ENCODE measurements at regions of chr13 and their contacts with region 1.

Region 1: DNA sequence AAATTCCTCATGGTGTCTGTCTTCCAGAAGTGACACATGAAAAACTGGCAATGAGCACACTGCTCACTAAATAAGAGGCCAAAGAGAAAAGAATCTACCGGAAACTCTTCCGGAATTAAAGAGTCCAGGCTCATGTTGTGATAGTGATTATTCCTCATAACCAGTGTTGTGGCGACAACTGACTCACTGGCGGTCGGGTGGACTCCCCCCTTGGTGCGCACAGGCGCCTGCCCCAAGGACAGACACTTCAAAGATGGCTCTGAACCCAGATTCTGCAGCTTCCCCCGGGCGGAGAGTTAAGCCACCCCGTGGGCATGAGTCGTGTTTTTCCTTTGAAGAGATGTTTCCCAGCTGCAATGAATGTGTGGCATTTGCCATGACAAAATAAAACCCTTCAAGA is 10.3 kb downstream of the IL17D start:
- DNase-seq: no peak
- H3K4me3 ChIP-seq: no peak overlapping the region
- H3K27ac ChIP-seq: no peak overlapping the region
- H3K4me1 ChIP-seq: no peaks in the 10 kb centered on the region
- H3K27me3 ChIP-seq: no peaks in the 10 kb centered on the region
- CTCF ChIP-seq: no peak

Region 2: DNA sequence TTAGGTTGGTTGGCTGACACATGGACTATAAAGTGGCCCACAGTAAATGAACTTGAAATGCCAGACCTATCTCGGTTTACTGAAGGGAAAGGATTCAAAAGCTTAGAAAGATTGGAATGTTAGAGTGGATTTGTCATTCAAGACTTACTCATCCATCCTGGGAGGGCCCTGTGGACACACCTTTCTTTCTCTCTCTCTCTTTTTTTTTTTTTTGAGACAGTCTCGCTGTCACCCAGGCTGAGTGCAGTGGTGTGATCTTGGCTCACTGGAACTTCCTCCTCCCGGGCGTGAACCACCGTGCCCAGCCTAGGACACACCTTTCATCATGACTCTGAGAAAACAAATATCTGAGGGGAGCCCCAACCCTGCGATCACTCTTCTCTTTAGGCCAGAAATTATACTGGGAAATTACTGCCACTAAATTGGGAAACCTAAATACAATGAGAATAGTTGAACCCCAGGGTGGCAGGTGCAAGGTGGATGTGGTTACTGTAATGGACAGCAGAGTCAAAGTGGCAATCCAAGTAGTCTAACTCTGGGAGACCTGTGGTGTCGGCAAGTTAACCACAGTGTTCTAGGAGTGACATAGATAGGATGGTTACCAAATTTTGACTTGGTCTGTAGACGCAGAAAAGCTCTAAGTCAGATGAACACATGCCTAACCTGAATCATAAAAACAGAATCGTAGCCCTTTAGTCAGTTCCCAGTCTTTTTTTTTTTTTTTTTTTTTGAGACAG is 803.2 kb before region 1 on chr13:
- CTCF ChIA-PET with region 1: interaction called, 10 read pairs
- POLR2A ChIA-PET with region 1: no interaction called
- intact Hi-C with region 1: no loop called
- DNase-seq: peak; percentile 57 to 88
- H3K4me3 ChIP-seq: no peak overlapping the region
- H3K27ac ChIP-seq: peak overlapping the region; percentile 83
- H3K4me1 ChIP-seq: peaks cover 17% of the 10 kb centered on the region
- H3K27me3 ChIP-seq: no peaks in the 10 kb centered on the region
- CTCF ChIP-seq: no peak

Region 3: GRCh38 chr13:20258208-20258962 is 455.4 kb before region 1 on chr13:
- CTCF ChIA-PET with region 1: no interaction called
- POLR2A ChIA-PET with region 1: no interaction called
- intact Hi-C with region 1: no loop called
- DNase-seq: no peak
- H3K4me3 ChIP-seq: no peak overlapping the region
- H3K27ac ChIP-seq: no peak overlapping the region
- H3K4me1 ChIP-seq: no peaks in the 10 kb centered on the region
- H3K27me3 ChIP-seq: no peaks in the 10 kb centered on the region
- CTCF ChIP-seq: no peak

Region 4: GRCh38 chr13:20495082-20496023 is 218.4 kb before region 1 on chr13:
- CTCF ChIA-PET with region 1: no interaction called
- POLR2A ChIA-PET with region 1: no interaction called
- intact Hi-C with region 1: loop called (anchors 5 kb)
- DNase-seq: peak; percentile 41 to 69
- H3K4me3 ChIP-seq: no peak overlapping the region
- H3K27ac ChIP-seq: no peak overlapping the region
- H3K4me1 ChIP-seq: no peaks in the 10 kb centered on the region
- H3K27me3 ChIP-seq: no peaks in the 10 kb centered on the region
- CTCF ChIP-seq: peak; percentile 97

Region 5: DNA sequence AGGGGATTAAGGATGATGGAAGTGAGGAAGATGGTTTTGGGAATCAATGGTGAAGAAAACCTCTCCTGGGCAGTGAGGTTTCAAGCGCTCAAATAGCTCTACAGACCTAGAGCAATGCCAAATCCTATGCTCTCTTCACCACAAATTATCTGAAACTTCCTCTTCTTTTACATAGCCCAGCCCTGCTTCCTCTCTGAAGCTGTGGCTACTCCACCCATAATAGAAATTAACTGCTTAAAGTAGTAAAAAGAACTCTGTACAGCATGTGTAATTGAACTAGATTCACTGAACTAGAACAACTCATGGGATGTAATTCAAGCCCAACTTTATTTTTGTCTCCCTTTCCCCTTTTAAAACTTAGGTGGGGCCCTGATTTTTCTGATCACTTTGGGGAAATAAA is 167.2 kb before region 1 on chr13:
- CTCF ChIA-PET with region 1: interaction called, 19 read pairs
- POLR2A ChIA-PET with region 1: no interaction called
- intact Hi-C with region 1: no loop called
- DNase-seq: no peak
- H3K4me3 ChIP-seq: no peak overlapping the region
- H3K27ac ChIP-seq: no peak overlapping the region
- H3K4me1 ChIP-seq: no peaks in the 10 kb centered on the region
- H3K27me3 ChIP-seq: no peaks in the 10 kb centered on the region
- CTCF ChIP-seq: no peak

Region 6: DNA sequence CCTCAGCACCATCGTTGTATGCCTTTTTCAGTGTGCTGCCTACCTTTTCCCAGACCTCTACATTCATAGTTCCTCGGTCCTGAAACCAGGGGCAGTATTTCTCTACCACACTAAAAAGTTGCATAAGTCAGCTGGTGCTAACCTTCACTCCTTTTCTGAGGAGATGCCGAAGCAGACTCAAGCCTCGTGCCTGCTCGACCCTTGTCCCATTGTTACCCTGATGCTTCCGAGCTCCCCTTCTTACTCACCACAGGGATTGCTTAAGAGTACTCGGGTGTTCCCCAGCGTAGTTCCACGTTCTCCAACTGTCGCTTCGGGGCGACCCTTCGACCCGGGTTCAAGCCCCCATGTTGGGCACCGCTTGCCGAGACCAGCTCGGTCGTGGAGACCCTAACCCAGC is 29.2 kb before region 1 on chr13:
- CTCF ChIA-PET with region 1: interaction called, 13 read pairs
- POLR2A ChIA-PET with region 1: no interaction called
- intact Hi-C with region 1: no loop called
- DNase-seq: no peak
- H3K4me3 ChIP-seq: no peak overlapping the region
- H3K27ac ChIP-seq: no peak overlapping the region
- H3K4me1 ChIP-seq: no peaks in the 10 kb centered on the region
- H3K27me3 ChIP-seq: no peaks in the 10 kb centered on the region
- CTCF ChIP-seq: no peak

Region 7: DNA sequence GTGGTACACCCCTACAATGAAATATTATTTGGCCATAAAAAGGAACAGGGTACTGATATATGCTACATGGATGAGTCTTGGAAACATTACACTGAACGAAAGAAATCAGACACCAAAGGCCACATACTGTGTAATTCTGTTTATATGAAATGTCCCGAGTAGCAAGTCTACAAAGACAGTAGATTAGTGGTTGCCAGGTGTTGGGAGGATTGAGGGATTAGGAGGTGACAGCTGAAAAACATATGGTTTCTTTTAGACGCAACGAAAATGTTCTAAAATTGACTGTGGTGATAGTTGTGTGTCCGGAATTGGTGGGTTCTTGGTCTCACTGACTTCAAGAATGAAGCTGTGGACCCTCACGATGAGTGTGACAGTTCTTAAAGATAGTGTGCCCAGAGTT is 24.9 kb after region 1 on chr13:
- CTCF ChIA-PET with region 1: no interaction called
- POLR2A ChIA-PET with region 1: no interaction called
- intact Hi-C with region 1: no loop called
- DNase-seq: no peak
- H3K4me3 ChIP-seq: no peak overlapping the region
- H3K27ac ChIP-seq: no peak overlapping the region
- H3K4me1 ChIP-seq: no peaks in the 10 kb centered on the region
- H3K27me3 ChIP-seq: no peaks in the 10 kb centered on the region
- CTCF ChIP-seq: no peak

Region 8: DNA sequence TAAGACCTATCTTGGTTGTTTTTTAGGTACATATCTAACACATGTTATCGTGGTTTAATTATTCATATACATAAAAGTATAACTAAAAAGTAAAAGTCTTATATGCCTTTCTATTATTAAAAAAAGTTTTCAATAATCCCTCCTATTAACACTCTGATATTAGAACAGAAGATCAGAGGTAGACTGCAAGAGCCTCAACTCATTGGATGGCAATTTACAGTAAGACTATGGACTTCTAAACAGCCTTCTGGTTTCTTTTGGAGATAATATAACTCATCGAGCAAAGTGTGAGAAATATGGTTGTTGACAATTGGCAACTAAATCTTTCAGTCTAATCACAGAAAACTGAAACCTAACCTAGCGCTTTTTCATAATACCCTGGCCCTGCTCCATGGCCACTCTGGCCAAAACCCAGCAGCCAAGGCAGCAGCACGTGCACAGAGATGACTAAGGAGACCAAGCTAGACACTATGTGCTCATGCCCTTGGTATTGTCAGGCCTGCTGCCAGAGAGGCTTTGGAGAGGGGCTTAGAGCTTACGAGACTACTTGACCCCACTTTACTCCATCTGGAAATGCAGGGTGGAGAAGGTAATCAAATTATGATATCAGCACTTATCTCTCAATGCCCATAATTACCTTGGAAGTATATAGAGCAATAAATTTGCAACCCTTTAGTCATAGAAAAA is 100.6 kb after region 1 on chr13:
- CTCF ChIA-PET with region 1: interaction called, 9 read pairs
- POLR2A ChIA-PET with region 1: no interaction called
- intact Hi-C with region 1: loop called (anchors 5 kb)
- DNase-seq: peak; percentile 54 to 65
- H3K4me3 ChIP-seq: no peak overlapping the region
- H3K27ac ChIP-seq: peak overlapping the region; percentile 25
- H3K4me1 ChIP-seq: peaks cover 16% of the 10 kb centered on the region
- H3K27me3 ChIP-seq: no peaks in the 10 kb centered on the region
- CTCF ChIP-seq: no peak

Region 9: GRCh38 chr13:20828539-20829364 is 115.0 kb after region 1 on chr13:
- CTCF ChIA-PET with region 1: no interaction called
- POLR2A ChIA-PET with region 1: no interaction called
- intact Hi-C with region 1: loop called (anchors 1 kb)
- DNase-seq: peak in 1 of 2 experiments; percentile 12
- H3K4me3 ChIP-seq: peak overlapping the region; percentile 32; the same call in 1 of the 2 replicates
- H3K27ac ChIP-seq: 0 out of 2 replicates have a peak overlapping the region, but pooled peaks have one; percentile 4
- H3K4me1 ChIP-seq: no peaks in the 10 kb centered on the region
- H3K27me3 ChIP-seq: no peaks in the 10 kb centered on the region
- CTCF ChIP-seq: peak; percentile 88